CD4-positive, alpha-beta T cell (primary cell): ENCODE measurements at regions of chr1 and their contacts with region 1.

Region 1: DNA sequence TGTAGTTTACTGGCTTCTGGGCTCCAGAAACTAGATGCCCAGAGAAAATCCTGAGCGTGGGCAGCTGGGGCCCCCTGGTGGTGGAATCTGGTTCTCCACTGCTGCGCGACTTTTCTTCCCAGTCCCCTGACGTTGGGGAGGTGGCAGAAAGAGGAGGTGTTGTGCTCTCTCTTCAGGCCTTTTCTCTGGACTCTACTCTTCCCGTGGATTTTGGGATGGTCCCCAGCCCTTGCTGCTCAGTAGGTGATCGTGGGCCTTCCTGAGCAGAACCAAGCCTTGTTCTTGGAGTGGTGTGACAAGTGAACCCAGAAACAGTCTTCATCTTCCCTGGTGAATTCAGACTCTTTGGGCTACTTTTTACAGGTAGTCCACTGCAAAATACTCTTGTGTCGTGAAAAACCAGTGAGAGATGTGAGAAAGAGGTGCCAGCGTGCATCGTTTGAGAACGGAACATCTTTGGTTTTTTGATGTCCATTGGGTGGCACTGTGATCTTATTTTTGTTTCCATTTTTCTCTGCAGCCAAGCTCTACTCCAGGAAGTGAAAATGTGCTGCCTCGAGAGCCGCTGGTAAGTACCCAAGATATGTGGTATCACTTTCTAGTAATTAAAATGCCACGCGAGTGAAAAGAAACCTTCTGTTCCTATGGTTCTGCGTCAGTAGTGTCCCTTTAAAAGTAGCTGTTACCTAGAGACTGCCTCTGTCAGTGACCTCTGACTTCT is 20.2 kb downstream of the PEX14 start:
- DNase-seq: peak; percentile 53 to 87 (median 78)
- ATAC-seq: peak; percentile 74
- H3K4me3 ChIP-seq: peak overlapping the region; percentile 53
- H3K4me3 Mint-ChIP-seq: peak overlapping the region; percentile 80
- H3K27ac ChIP-seq: peak overlapping the region; percentile 50 to 60
- H3K27ac Mint-ChIP-seq: peak overlapping the region; percentile 93
- H3K4me1 ChIP-seq: peaks cover 33% of the 10 kb centered on the region
- H3K4me1 Mint-ChIP-seq: peaks cover 59% of the 10 kb centered on the region
- H3K27me3 ChIP-seq: no peaks in the 10 kb centered on the region
- H3K27me3 Mint-ChIP-seq: no peaks in the 10 kb centered on the region
- CTCF ChIP-seq: peak; percentile 99

Region 2: DNA sequence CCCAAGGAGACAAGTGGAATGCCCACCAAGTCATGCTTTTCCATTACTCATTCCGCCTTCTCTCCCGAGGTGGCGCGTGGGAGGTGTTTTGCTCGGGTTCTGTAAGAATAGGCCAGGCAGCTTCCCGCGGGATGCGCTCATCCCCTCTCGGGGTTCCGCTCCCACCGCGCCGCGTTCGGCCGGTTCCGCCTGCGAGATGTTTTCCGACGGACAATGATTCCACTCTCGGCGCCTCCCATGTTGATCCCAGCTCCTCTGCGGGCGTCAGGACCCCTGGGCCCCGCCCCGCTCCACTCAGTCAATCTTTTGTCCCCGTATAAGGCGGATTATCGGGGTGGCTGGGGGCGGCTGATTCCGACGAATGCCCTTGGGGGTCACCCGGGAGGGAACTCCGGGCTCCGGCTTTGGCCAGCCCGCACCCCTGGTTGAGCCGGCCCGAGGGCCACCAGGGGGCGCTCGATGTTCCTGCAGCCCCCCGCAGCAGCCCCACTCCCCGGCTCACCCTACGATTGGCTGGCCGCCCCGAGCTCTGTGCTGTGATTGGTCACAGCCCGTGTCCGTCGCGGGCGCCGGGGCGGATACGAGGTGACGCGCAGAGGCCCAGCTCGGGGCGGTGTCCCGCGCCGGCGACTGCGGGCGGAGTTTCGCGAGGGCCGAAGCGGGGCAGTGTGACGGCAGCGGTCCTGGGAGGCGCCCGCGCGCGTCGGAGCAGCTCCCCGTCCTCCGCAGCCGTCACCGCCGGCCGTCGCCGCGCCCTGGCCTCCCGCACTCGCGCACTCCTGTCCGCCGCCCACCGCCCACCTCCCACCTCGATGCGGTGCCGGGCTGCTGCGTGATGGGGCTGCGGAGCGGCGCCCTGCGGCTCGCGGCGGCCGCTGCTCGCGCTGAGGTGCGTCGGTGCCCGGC is 284.8 kb before region 1 on chr1 and contains the start of gene KIF1B:
- CTCF ChIA-PET with region 1: no interaction called
- POLR2A ChIA-PET with region 1: no interaction called
- intact Hi-C with region 1: loop called in 1 of 2 experiments (anchors 5 kb)
- DNase-seq: peak; percentile 91 to 98 (median 96)
- ATAC-seq: peak; percentile 99
- H3K4me3 ChIP-seq: peak within 1 kb of the TSS; percentile 76
- H3K4me3 Mint-ChIP-seq: peak within 1 kb of the TSS; percentile 94
- H3K27ac ChIP-seq: no peak within 1 kb of the TSS
- H3K27ac Mint-ChIP-seq: peak within 1 kb of the TSS; percentile 82
- H3K4me1 ChIP-seq: peaks cover 17% of the 10 kb centered on the region
- H3K4me1 Mint-ChIP-seq: peaks cover 37% of the 10 kb centered on the region
- H3K27me3 ChIP-seq: no peaks in the 10 kb centered on the region
- H3K27me3 Mint-ChIP-seq: peaks cover 4% of the 10 kb centered on the region
- CTCF ChIP-seq: peak; percentile 99
- total RNA-seq, gene KIF1B: 7.9 to 9.7 TPM

Region 3: GRCh38 chr1:10472220-10473144 is 22.4 kb before region 1 on chr1 and contains the start of gene DFFA:
- CTCF ChIA-PET with region 1: interaction called, 11 read pairs
- POLR2A ChIA-PET with region 1: interaction called, 11 read pairs
- intact Hi-C with region 1: loop called in 1 of 2 experiments (anchors 2 kb)
- DNase-seq: peak; percentile 77 to 96 (median 87)
- ATAC-seq: peak; percentile 83
- H3K4me3 ChIP-seq: peak within 1 kb of the TSS; percentile 79
- H3K4me3 Mint-ChIP-seq: peak within 1 kb of the TSS; percentile 89
- H3K27ac ChIP-seq: peak within 1 kb of the TSS; percentile 27 to 38
- H3K27ac Mint-ChIP-seq: peak within 1 kb of the TSS; percentile 75
- H3K4me1 ChIP-seq: peaks cover 45% of the 10 kb centered on the region
- H3K4me1 Mint-ChIP-seq: peaks cover 50% of the 10 kb centered on the region
- H3K27me3 ChIP-seq: no peaks in the 10 kb centered on the region
- H3K27me3 Mint-ChIP-seq: no peaks in the 10 kb centered on the region
- CTCF ChIP-seq: no peak
- total RNA-seq, gene DFFA: 7.4 to 9.1 TPM

Region 4: DNA sequence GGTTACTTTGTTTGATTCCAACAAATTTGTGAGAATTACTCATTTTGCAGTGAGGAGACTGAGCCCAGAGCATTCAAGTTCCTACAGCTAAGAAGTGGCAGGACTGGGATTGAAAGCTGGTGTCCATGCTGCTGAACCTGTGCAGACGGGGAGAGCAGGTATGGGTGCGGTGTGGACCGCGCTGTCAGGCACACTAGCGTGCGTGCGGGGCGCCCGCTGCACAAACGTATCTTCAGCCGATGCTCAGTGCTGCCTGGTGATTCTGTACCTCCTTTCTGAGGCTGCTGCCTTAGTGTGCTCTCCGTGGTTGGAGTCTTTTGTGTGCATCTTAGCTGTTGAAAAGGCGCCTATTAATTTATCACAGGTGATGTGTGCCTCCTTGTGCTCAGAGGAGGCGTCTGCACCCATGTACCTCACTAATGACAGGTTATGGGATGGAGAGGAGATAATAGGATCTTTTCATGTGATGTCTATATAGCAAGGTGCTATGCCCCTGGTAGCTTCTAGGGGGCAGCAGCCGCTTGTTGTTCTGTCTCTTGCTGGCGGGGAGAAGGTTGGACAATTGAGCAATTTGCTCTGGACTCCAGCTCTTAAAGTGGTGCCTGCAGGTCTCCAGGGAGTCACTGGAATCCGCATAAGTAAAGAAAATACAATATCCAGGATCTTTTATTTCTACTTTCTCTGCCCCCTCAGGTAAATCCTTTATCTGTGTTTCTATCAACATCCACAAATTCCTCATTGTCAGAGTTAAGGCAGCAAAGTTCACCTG is 12.4 kb after region 1 on chr1:
- CTCF ChIA-PET with region 1: interaction called, 126 read pairs
- POLR2A ChIA-PET with region 1: interaction called, 33 read pairs
- intact Hi-C with region 1: loop called in 1 of 2 experiments (anchors 1 kb)
- DNase-seq: peak; percentile 37 to 76 (median 50)
- ATAC-seq: peak; percentile 76
- H3K4me3 ChIP-seq: no peak overlapping the region
- H3K4me3 Mint-ChIP-seq: peak overlapping the region; percentile 0
- H3K27ac ChIP-seq: no peak overlapping the region
- H3K27ac Mint-ChIP-seq: peak overlapping the region; percentile 64
- H3K4me1 ChIP-seq: peaks cover 43% of the 10 kb centered on the region
- H3K4me1 Mint-ChIP-seq: peaks cover 58% of the 10 kb centered on the region
- H3K27me3 ChIP-seq: no peaks in the 10 kb centered on the region
- H3K27me3 Mint-ChIP-seq: no peaks in the 10 kb centered on the region
- CTCF ChIP-seq: peak; percentile 79

Region 5: DNA sequence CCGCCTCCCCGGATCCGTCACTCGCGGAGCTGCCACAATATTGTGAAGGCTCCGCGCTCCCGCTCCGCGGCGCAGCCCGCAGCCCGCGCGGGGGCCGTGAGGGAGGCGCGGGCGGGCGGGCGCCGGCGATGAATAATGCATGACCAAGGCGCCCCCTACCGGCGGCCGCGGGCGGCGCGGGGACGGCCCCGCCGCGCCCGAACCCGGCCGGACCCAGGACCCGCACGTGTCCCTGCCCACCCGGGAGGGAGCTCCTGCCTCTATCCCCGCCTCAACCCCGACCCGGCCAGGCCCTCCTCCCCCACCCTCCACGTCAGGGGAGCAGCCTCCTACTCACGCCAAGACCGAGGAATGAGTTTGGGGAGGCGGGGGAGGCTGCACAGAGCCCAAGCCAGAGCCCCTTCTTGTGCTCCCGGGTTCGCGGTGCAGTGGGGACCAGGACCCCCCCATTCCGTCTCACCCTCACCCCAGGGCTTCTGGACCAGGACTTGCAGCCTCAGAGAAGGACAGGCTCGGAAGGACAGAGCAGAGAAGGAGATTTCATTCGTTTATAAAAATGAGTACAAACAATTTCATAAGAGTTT is 372.3 kb after region 1 on chr1:
- CTCF ChIA-PET with region 1: interaction called, 3 read pairs
- POLR2A ChIA-PET with region 1: interaction called, 8 read pairs
- intact Hi-C with region 1: loop called (anchors 1 to 2 kb)
- DNase-seq: peak; percentile 39 to 82 (median 59)
- ATAC-seq: peak; percentile 85
- H3K4me3 ChIP-seq: peak overlapping the region; percentile 29
- H3K4me3 Mint-ChIP-seq: peak overlapping the region; percentile 6
- H3K27ac ChIP-seq: no peak overlapping the region
- H3K27ac Mint-ChIP-seq: no peak overlapping the region
- H3K4me1 ChIP-seq: peaks cover 16% of the 10 kb centered on the region
- H3K4me1 Mint-ChIP-seq: peaks cover 25% of the 10 kb centered on the region
- H3K27me3 ChIP-seq: peaks cover 40 to 41% of the 10 kb centered on the region in 2 experiments
- H3K27me3 Mint-ChIP-seq: peaks cover 71% of the 10 kb centered on the region
- CTCF ChIP-seq: peak; percentile 48

Region 6: DNA sequence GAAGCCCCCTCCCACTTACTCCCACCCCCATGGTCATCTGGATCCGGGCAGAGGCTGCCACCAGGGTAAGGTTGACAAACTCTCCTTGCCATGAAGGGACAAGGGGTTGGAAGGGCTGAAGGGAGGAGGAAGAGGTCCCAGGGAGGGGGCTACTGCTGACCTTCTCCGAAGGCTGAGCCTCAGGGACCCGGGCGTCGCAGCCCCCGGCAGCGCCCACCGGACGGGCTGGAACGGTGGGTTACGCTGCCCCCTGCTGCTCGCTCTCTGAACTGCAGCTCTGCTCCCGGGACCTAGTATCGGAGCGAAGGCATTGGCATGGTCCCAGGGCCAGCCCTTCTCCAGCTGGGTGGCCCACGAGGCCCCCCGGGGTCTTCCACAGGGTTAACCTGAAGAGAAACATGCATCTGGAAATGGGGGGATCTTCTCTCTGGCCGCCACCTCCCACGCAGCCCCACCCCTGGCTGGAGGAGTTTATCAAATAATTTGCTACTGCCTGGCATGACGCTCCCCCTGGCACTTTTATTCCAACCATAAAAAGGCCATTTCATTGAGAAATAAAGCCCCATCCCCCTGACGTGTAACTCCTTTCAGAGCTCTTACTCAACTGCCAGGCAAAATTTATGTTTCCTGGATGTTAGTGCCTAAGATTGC is 447.1 kb after region 1 on chr1:
- CTCF ChIA-PET with region 1: no interaction called
- POLR2A ChIA-PET with region 1: interaction called, 4 read pairs
- intact Hi-C with region 1: loop called in 1 of 2 experiments (anchors 2 kb)
- DNase-seq: peak; percentile 38 to 78 (median 56)
- ATAC-seq: peak; percentile 71
- H3K4me3 ChIP-seq: no peak overlapping the region
- H3K4me3 Mint-ChIP-seq: peak overlapping the region; percentile 20
- H3K27ac ChIP-seq: no peak overlapping the region
- H3K27ac Mint-ChIP-seq: no peak overlapping the region
- H3K4me1 ChIP-seq: peaks cover 42% of the 10 kb centered on the region
- H3K4me1 Mint-ChIP-seq: peaks cover 34% of the 10 kb centered on the region
- H3K27me3 ChIP-seq: peaks cover 8 to 14% of the 10 kb centered on the region in 2 experiments
- H3K27me3 Mint-ChIP-seq: peaks cover 53% of the 10 kb centered on the region
- CTCF ChIP-seq: peak; percentile 91

Region 7: DNA sequence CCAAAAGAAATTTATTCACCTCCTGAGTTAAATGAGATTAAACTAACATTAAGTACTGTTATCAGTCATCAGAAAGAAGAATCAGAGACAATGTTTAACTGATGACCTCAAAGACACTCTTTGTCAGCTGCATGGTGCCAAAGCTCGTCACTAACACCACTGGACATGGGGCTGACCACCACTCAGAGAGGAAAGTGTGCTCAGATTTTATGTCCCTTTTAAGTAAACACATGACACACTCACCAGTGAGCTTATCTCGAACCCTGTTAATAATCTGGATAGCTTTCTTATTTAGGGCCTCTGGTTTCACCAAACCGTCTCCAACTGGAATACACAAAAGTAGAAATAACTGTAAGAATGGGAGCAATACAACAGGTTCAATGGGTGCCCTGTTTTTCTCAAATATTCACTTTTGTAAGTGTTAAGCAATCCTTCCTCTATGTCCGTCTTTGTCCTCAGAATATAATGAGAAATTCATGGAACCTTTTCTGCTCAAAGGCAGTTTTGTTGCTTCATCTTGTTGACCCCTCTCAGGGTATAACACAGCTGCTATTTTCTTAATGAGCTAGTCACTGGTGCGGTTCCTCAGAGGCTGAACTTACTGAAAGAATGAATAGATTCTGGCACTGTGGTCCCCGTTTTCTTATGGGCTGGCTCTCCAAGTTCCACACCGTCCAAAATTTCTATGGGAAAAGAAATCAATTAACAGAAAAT is 614.3 kb after region 1 on chr1:
- CTCF ChIA-PET with region 1: no interaction called
- POLR2A ChIA-PET with region 1: no interaction called
- intact Hi-C with region 1: no loop called
- DNase-seq: no peak
- ATAC-seq: no peak
- H3K4me3 ChIP-seq: no peak overlapping the region
- H3K4me3 Mint-ChIP-seq: no peak overlapping the region
- H3K27ac ChIP-seq: no peak overlapping the region
- H3K27ac Mint-ChIP-seq: no peak overlapping the region
- H3K4me1 ChIP-seq: no peaks in the 10 kb centered on the region
- H3K4me1 Mint-ChIP-seq: no peaks in the 10 kb centered on the region
- H3K27me3 ChIP-seq: no peaks in the 10 kb centered on the region
- H3K27me3 Mint-ChIP-seq: no peaks in the 10 kb centered on the region
- CTCF ChIP-seq: no peak